Psoas muscle (tissue), 8 donors: ENCODE measurements at regions of chr7 and their contacts with region 1.

Region 1: DNA sequence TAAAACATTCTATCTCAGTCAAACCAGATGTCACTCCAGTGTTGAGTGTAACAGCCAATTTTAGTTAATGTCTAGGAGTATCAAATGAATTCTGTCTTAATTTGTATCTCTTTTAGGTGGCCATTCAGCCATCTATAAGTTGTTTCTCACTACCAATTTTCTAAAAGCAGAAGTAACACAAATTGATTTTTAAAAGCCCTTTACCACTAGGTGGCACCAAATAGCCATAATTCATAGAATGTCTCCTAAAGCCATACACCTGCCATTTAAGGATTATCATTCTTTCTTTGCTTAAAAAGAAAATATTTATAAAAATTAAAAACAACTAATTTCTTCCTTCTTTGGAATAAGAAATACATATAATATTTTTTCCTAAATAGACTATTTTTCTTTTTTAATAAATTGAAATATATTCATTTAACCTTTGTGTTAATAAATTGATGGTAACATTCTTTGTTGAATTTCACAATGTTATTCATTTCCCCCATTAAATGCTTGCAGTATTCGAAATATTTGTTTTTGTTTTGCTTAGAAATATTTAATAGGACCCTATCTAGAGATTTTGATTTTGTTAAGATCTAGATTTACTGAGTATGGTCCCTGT is 107.8 kb upstream of the PPP1R3A start:
- DNase-seq: no peak
- ATAC-seq: peak in 3 of 4 donors; percentile 45 to 80 (median 60)
- H3K4me3 ChIP-seq: no peak overlapping the region
- H3K27ac ChIP-seq: no peak overlapping the region
- H3K4me1 ChIP-seq: no peaks in the 10 kb centered on the region
- H3K27me3 ChIP-seq: no peaks in the 10 kb centered on the region
- CTCF ChIP-seq: peak; percentile 81

Region 2: GRCh38 chr7:115910541-115911164 is 1884.1 kb after region 1 on chr7:
- intact Hi-C with region 1: loop called in 1 of 2 experiments (anchors 10 kb)
- DNase-seq: no peak
- ATAC-seq: no peak
- H3K4me3 ChIP-seq: no peak overlapping the region
- H3K27ac ChIP-seq: no peak overlapping the region
- H3K4me1 ChIP-seq: peaks cover 6% of the 10 kb centered on the region
- H3K27me3 ChIP-seq: no peaks in the 10 kb centered on the region
- CTCF ChIP-seq: peak; percentile 48